Naive thymus-derived CD4-positive, alpha-beta T cell (primary cell): ENCODE measurements at regions of chr10 and their contacts with region 1.

Region 1: GRCh38 chr10:57338823-57339558 is 928.7 kb downstream of the IPMK start:
- DNase-seq: peak in 1 of 9 donors; percentile 11
- ATAC-seq: no peak
- H3K4me3 ChIP-seq: no peak overlapping the region
- H3K4me3 Mint-ChIP-seq: no peak overlapping the region
- H3K27ac ChIP-seq: no peak overlapping the region
- H3K27ac Mint-ChIP-seq: no peak overlapping the region
- H3K4me1 ChIP-seq: no peaks in the 10 kb centered on the region
- H3K4me1 Mint-ChIP-seq: no peaks in the 10 kb centered on the region
- H3K27me3 ChIP-seq: no peaks in the 10 kb centered on the region
- H3K27me3 Mint-ChIP-seq: no peaks in the 10 kb centered on the region

Region 2: DNA sequence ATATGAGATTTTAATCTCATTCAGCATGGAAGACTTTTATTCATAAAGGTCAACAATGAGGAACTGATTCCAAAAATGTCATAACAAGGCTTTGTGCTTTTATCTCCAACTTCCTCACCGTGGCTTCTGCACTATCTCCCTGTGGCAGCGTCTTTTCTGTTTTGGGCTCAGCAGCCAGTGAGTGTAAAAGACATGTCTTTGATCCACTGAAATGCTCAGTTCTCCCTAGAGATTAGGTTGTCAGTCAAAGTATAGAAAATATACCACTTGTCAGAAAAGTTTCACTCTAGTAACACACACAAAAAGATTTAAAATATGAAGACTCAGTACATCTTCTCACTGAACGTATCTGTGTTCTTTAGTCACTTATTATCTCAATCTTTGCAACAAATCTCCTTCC is 76.1 kb before region 1 on chr10:
- CTCF ChIA-PET with region 1: no interaction called
- POLR2A ChIA-PET with region 1: no interaction called
- intact Hi-C with region 1: no loop called
- DNase-seq: no peak
- ATAC-seq: no peak
- H3K4me3 ChIP-seq: no peak overlapping the region
- H3K4me3 Mint-ChIP-seq: no peak overlapping the region
- H3K27ac ChIP-seq: no peak overlapping the region
- H3K27ac Mint-ChIP-seq: no peak overlapping the region
- H3K4me1 ChIP-seq: no peaks in the 10 kb centered on the region
- H3K4me1 Mint-ChIP-seq: no peaks in the 10 kb centered on the region
- H3K27me3 ChIP-seq: no peaks in the 10 kb centered on the region
- H3K27me3 Mint-ChIP-seq: no peaks in the 10 kb centered on the region

Region 3: GRCh38 chr10:57605948-57606485 is 267.0 kb after region 1 on chr10:
- CTCF ChIA-PET with region 1: no interaction called
- POLR2A ChIA-PET with region 1: no interaction called
- intact Hi-C with region 1: no loop called
- DNase-seq: no peak
- ATAC-seq: no peak
- H3K4me3 ChIP-seq: no peak overlapping the region
- H3K4me3 Mint-ChIP-seq: no peak overlapping the region
- H3K27ac ChIP-seq: no peak overlapping the region
- H3K27ac Mint-ChIP-seq: no peak overlapping the region
- H3K4me1 ChIP-seq: no peaks in the 10 kb centered on the region
- H3K4me1 Mint-ChIP-seq: no peaks in the 10 kb centered on the region
- H3K27me3 ChIP-seq: no peaks in the 10 kb centered on the region
- H3K27me3 Mint-ChIP-seq: no peaks in the 10 kb centered on the region

Region 4: GRCh38 chr10:57657164-57657765 is 318.3 kb after region 1 on chr10:
- CTCF ChIA-PET with region 1: no interaction called
- POLR2A ChIA-PET with region 1: no interaction called
- intact Hi-C with region 1: loop called in 1 of 2 experiments (anchors 1 kb)
- DNase-seq: peak in 1 of 9 donors; percentile 26
- ATAC-seq: peak; percentile 31
- H3K4me3 ChIP-seq: no peak overlapping the region
- H3K4me3 Mint-ChIP-seq: no peak overlapping the region
- H3K27ac ChIP-seq: no peak overlapping the region
- H3K27ac Mint-ChIP-seq: no peak overlapping the region
- H3K4me1 ChIP-seq: no peaks in the 10 kb centered on the region
- H3K4me1 Mint-ChIP-seq: peaks cover 0 to 2% (median 0%) of the 10 kb centered on the region in 7 donors
- H3K27me3 ChIP-seq: no peaks in the 10 kb centered on the region
- H3K27me3 Mint-ChIP-seq: no peaks in the 10 kb centered on the region

Region 5: GRCh38 chr10:58064714-58065528 is 725.9 kb after region 1 on chr10:
- CTCF ChIA-PET with region 1: no interaction called
- POLR2A ChIA-PET with region 1: no interaction called
- intact Hi-C with region 1: loop called in 1 of 2 experiments (anchors 2 kb)
- DNase-seq: peak in 1 of 9 donors; percentile 13
- ATAC-seq: peak; percentile 40
- H3K4me3 ChIP-seq: no peak overlapping the region
- H3K4me3 Mint-ChIP-seq: no peak overlapping the region
- H3K27ac ChIP-seq: no peak overlapping the region
- H3K27ac Mint-ChIP-seq: no peak overlapping the region
- H3K4me1 ChIP-seq: no peaks in the 10 kb centered on the region
- H3K4me1 Mint-ChIP-seq: no peaks in the 10 kb centered on the region
- H3K27me3 ChIP-seq: no peaks in the 10 kb centered on the region
- H3K27me3 Mint-ChIP-seq: peaks cover 3 to 22% (median 13%) of the 10 kb centered on the region in 5 donors